ENCODE measurements at regions of chr1 and their contacts with region 1.

Region 1: DNA sequence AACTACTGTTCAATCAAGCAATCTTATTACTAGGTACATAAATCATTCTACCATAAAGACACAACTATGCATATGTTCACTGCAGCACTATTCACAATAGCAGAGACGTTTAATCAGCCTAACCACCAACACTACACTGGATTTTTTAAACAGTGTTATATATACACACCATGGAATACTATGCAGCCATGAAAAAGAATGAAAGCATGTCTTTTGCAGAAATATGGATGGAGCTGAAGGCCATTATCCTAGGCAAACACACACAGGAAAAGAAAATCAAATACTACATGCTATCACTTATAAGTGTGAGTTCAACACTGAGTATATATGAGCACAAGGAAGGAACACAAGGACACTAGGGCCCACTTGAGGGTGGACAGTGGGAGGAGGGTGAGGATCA is 159.2 kb downstream of the DPYD start:
- DNase-seq: no peak
- ATAC-seq: no peak
- H3K4me3 ChIP-seq: no peak overlapping the region
- H3K4me3 Mint-ChIP-seq: no peak overlapping the region
- H3K27ac ChIP-seq: no peak overlapping the region
- H3K27ac Mint-ChIP-seq: no peak overlapping the region
- H3K4me1 ChIP-seq: no peaks in the 10 kb centered on the region
- H3K4me1 Mint-ChIP-seq: peaks cover 2% of the 10 kb centered on the region
- H3K27me3 ChIP-seq: no peaks in the 10 kb centered on the region
- H3K27me3 Mint-ChIP-seq: no peaks in the 10 kb centered on the region
- CTCF ChIP-seq: no peak

Region 2: DNA sequence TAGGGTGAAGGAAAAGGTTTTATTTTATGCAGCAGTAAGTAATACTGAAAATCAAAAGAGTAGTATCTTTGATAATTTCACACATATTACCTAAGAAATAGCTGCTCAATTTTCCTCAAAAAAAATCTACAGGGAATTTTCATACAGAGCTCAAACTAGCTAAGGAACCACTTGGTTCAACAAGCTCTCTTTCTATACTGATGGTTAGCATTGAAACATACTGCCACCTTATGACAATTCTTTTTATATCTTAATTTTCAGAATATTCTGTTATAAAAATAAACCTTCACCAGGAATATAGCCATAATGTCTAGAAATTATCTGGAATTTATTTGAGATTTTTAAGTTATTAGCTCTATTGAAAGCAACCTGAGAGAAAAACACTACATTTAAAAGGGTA is 17.1 kb after region 1 on chr1:
- CTCF ChIA-PET with region 1: no interaction called
- POLR2A ChIA-PET with region 1: no interaction called
- intact Hi-C with region 1: loop called in 1 of 2 experiments (anchors 2 kb)
- DNase-seq: no peak
- ATAC-seq: no peak
- H3K4me3 ChIP-seq: no peak overlapping the region
- H3K4me3 Mint-ChIP-seq: no peak overlapping the region
- H3K27ac ChIP-seq: no peak overlapping the region
- H3K27ac Mint-ChIP-seq: no peak overlapping the region
- H3K4me1 ChIP-seq: no peaks in the 10 kb centered on the region
- H3K4me1 Mint-ChIP-seq: peaks cover 8% of the 10 kb centered on the region
- H3K27me3 ChIP-seq: no peaks in the 10 kb centered on the region
- H3K27me3 Mint-ChIP-seq: no peaks in the 10 kb centered on the region
- CTCF ChIP-seq: no peak